Activated B cell treated with CpG ODN at 0.5 μM for 24 hours (primary cell): ENCODE measurements at regions of chr6 and their contacts with region 1.

Region 1: GRCh38 chr6:43769526-43770416 is at the start of gene VEGFA:
- DNase-seq: peak; percentile 85
- ATAC-seq: peak; percentile 71
- H3K4me3 Mint-ChIP-seq: peak within 1 kb of the TSS; percentile 94
- H3K27ac Mint-ChIP-seq: peak within 1 kb of the TSS; percentile 86
- H3K4me1 Mint-ChIP-seq: peaks cover 27% of the 10 kb centered on the region
- H3K27me3 Mint-ChIP-seq: peaks cover 16% of the 10 kb centered on the region
- CTCF ChIP-seq: peak; percentile 85
- total RNA-seq, gene VEGFA: 29.0 and 31.3 TPM in 2 replicates

Region 2: GRCh38 chr6:42572523-42572922 is 1197.2 kb before region 1 on chr6:
- CTCF ChIA-PET with region 1: no interaction called
- POLR2A ChIA-PET with region 1: no interaction called
- intact Hi-C with region 1: loop called (anchors 5 kb)
- DNase-seq: peak; percentile 25
- ATAC-seq: peak; percentile 91
- H3K4me3 Mint-ChIP-seq: peak overlapping the region; percentile 63
- H3K27ac Mint-ChIP-seq: peak overlapping the region; percentile 91
- H3K4me1 Mint-ChIP-seq: peaks cover 47% of the 10 kb centered on the region
- H3K27me3 Mint-ChIP-seq: no peaks in the 10 kb centered on the region
- CTCF ChIP-seq: no peak

Region 3: GRCh38 chr6:43635387-43636307 is 134.1 kb before region 1 on chr6 and contains the start of gene MAD2L1BP:
- CTCF ChIA-PET with region 1: no interaction called
- POLR2A ChIA-PET with region 1: interaction called, 12 read pairs
- intact Hi-C with region 1: no loop called
- DNase-seq: peak; percentile 77
- ATAC-seq: peak; percentile 88
- H3K4me3 Mint-ChIP-seq: peak within 1 kb of the TSS; percentile 98
- H3K27ac Mint-ChIP-seq: peak within 1 kb of the TSS; percentile 96
- H3K4me1 Mint-ChIP-seq: peaks cover 48% of the 10 kb centered on the region
- H3K27me3 Mint-ChIP-seq: no peaks in the 10 kb centered on the region
- CTCF ChIP-seq: no peak
- total RNA-seq, gene MAD2L1BP: 40.1 and 40.5 TPM in 2 replicates

Region 4: DNA sequence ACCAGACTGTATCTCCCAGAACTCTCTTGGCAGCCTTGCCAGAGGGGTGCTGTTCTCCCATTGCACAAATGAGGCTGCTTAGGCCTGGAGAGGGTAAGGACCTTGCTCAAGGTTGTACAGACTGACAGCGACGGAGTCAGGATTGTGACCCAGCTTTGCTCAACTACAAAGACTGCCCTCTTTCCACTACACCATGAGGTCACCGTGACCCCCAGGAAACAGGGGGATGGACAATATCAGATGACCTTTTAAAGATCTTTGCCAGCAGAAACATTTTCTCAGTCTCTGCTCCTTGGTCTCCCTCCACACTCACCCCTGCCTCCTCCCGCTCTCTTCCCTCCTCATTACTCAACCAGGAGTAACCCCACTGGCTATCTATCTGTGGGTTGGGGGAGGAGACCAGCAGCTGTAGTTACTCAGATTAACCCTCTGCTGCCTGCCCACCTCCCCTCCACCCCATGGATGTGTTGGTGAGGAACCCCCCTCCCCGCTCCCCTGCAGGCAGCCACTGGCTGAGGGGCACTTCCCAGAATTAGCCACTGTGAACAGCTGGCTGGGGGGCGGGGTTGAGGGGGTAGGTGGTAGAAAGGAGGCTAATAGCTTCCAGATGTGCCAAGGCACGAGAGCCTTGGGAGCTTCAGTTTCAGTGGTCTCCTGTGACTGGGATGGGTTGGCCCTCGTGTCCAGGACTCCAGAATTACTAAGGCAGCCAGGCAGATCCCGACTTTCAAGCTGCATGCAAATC is 55.3 kb before region 1 on chr6:
- CTCF ChIA-PET with region 1: interaction called, 11 read pairs
- POLR2A ChIA-PET with region 1: interaction called, 41 read pairs
- intact Hi-C with region 1: loop called (anchors 1 kb)
- DNase-seq: peak; percentile 65
- ATAC-seq: peak; percentile 15
- H3K4me3 Mint-ChIP-seq: peak overlapping the region; percentile 81
- H3K27ac Mint-ChIP-seq: peak overlapping the region; percentile 91
- H3K4me1 Mint-ChIP-seq: peaks cover 60% of the 10 kb centered on the region
- H3K27me3 Mint-ChIP-seq: no peaks in the 10 kb centered on the region
- CTCF ChIP-seq: no peak

Region 5: GRCh38 chr6:44002593-44003344 is 233.0 kb after region 1 on chr6:
- CTCF ChIA-PET with region 1: no interaction called
- POLR2A ChIA-PET with region 1: no interaction called
- intact Hi-C with region 1: loop called (anchors 2 kb)
- DNase-seq: peak; percentile 49
- ATAC-seq: peak; percentile 61
- H3K4me3 Mint-ChIP-seq: peak overlapping the region; percentile 76
- H3K27ac Mint-ChIP-seq: no peak overlapping the region
- H3K4me1 Mint-ChIP-seq: peaks cover 20% of the 10 kb centered on the region
- H3K27me3 Mint-ChIP-seq: peaks cover 49% of the 10 kb centered on the region
- CTCF ChIP-seq: no peak

Region 6: DNA sequence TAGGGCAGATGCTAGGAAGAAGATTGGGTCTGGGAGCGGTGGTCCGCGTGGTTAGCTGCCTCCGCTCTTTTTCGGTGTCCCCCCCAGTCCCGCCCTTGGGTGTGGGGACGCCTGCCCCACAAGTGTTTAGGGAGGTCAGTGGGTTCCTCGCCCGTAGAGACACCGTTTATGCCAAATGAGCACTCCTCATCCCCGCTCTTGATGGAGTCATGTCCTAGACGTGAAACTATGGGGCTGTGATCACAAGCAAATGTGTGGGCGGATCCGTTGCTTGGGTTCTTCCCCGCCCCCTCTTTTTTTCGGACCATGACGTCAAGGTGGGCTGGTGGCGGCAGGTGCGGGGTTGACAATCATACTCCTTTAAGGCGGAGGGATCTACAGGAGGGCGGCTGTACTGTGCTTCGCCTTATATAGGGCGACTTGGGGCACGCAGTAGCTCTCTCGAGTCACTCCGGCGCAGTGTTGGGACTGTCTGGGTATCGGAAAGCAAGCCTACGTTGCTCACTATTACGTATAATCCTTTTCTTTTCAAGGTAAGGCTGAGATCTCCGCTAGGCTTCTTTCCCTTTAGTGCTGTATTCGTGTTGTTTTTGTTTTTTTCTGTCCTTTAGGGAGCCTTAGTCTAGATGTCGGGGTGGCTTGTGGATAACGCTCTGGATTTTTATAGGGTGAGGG is 477.0 kb after region 1 on chr6 and contains the start of gene HSP90AB1:
- CTCF ChIA-PET with region 1: no interaction called
- POLR2A ChIA-PET with region 1: interaction called, 8 read pairs
- intact Hi-C with region 1: loop called (anchors 10 kb)
- DNase-seq: peak; percentile 88
- ATAC-seq: peak; percentile 75
- H3K4me3 Mint-ChIP-seq: peak within 1 kb of the TSS; percentile 99
- H3K27ac Mint-ChIP-seq: peak within 1 kb of the TSS; percentile 99
- H3K4me1 Mint-ChIP-seq: peaks cover 56% of the 10 kb centered on the region
- H3K27me3 Mint-ChIP-seq: no peaks in the 10 kb centered on the region
- CTCF ChIP-seq: no peak
- total RNA-seq, gene HSP90AB1: 1,222 and 1,311 TPM in 2 replicates